Natural killer cell (primary cell): ENCODE measurements at regions of chr2 and their contacts with region 1.

Region 1: GRCh38 chr2:55168221-55169154 is 63.6 kb downstream of the CLHC1 start:
- DNase-seq: peak in 1 of 2 donors; percentile 73
- ATAC-seq: peak in 2 of 3 donors; percentile 48 to 62
- H3K4me3 ChIP-seq: no peak overlapping the region
- H3K4me3 Mint-ChIP-seq: no peak overlapping the region
- H3K27ac ChIP-seq: no peak overlapping the region
- H3K27ac Mint-ChIP-seq: no peak overlapping the region
- H3K4me1 ChIP-seq: no peaks in the 10 kb centered on the region
- H3K4me1 Mint-ChIP-seq: peaks cover 5 to 14% of the 10 kb centered on the region in 2 donors
- H3K27me3 ChIP-seq: no peaks in the 10 kb centered on the region
- H3K27me3 Mint-ChIP-seq: no peaks in the 10 kb centered on the region
- CTCF ChIP-seq: peak; percentile 59

Region 2: GRCh38 chr2:54899576-54900200 is 268.8 kb before region 1 on chr2:
- intact Hi-C with region 1: loop called (anchors 2 kb)
- DNase-seq: peak in 1 of 2 donors; percentile 51
- ATAC-seq: peak in 1 of 3 donors; percentile 43
- H3K4me3 ChIP-seq: no peak overlapping the region
- H3K4me3 Mint-ChIP-seq: no peak overlapping the region
- H3K27ac ChIP-seq: no peak overlapping the region
- H3K27ac Mint-ChIP-seq: peak overlapping the region in 1 of 2 donors; percentile 29
- H3K4me1 ChIP-seq: peaks cover 11% of the 10 kb centered on the region
- H3K4me1 Mint-ChIP-seq: peaks cover 12 to 17% of the 10 kb centered on the region in 2 donors
- H3K27me3 ChIP-seq: no peaks in the 10 kb centered on the region
- H3K27me3 Mint-ChIP-seq: peaks cover 0 to 3% of the 10 kb centered on the region in 2 donors
- CTCF ChIP-seq: peak; percentile 44

Region 3: DNA sequence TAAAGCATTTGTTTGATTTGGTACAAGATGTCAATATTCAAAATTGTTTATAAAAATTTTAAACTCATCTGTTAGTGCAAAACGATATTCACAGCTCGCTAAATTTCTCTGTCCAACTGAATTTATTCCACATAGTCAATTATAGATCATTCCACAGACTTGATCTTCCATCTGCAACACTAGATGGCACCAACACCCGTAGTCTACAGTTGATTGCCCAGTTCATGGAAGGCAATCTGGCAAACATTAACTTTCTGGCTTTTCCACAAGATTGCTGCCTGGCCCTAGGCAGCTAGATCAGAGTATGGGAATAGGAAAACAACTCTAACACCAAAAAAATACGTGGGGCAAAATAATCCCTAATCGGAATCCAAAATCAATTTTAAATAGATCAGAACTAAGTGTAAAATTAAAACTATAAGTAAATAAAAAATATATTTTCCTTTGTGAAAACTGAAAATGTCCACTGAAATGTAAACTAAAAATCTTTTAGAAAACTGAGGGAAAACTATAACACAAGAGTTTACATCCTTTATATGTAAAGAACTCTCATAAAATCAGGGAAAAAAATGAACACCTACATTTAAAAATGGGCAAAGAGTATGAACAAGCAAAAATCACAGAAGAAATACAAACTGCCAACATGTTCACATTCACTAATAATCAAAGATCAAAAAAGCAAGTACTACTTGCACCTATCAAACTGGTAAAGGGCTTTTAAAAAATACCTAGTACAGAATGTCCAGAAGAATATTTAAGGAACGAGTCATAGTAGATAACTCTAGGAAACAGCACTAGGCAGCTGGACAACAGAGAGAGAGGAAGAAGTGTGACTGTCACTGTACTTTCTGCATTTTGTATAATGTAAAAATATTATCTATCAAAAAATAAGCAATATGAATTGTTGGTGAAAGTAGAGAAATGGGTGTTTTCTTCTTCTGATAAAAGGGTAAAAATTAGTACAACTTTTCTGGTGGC is 153.2 kb before region 1 on chr2:
- intact Hi-C with region 1: loop called (anchors 2 kb)
- DNase-seq: peak in 1 of 2 donors; percentile 75
- ATAC-seq: peak in 2 of 3 donors; percentile 19 to 39
- H3K4me3 ChIP-seq: no peak overlapping the region
- H3K4me3 Mint-ChIP-seq: no peak overlapping the region
- H3K27ac ChIP-seq: no peak overlapping the region
- H3K27ac Mint-ChIP-seq: peak overlapping the region in 1 of 2 donors; percentile 53
- H3K4me1 ChIP-seq: peaks cover 4% of the 10 kb centered on the region
- H3K4me1 Mint-ChIP-seq: peaks cover 49 to 63% of the 10 kb centered on the region in 2 donors
- H3K27me3 ChIP-seq: no peaks in the 10 kb centered on the region
- H3K27me3 Mint-ChIP-seq: no peaks in the 10 kb centered on the region
- CTCF ChIP-seq: peak; percentile 41

Region 4: DNA sequence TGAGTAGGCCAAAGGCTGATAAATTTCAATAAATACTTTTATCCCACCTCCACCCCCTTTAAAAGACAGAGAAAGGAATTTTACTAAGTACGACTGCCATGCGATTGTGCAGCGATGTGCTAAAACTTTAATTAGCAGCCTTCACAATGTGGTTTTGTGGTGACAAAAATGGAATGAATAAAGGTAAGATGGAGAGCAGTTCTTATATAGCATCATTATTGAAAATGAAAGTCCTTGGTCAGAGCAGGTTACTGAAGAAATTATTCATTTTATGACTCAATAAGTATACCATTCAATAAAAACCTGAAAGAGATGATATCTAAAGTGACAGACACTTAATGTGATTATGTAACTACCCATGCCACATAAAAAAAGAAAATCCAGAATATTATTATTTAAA is 133.8 kb after region 1 on chr2:
- intact Hi-C with region 1: no loop called
- DNase-seq: peak in 1 of 2 donors; percentile 28
- ATAC-seq: peak in 2 of 3 donors; percentile 34 to 63
- H3K4me3 ChIP-seq: no peak overlapping the region
- H3K4me3 Mint-ChIP-seq: no peak overlapping the region
- H3K27ac ChIP-seq: no peak overlapping the region
- H3K27ac Mint-ChIP-seq: peak overlapping the region in 1 of 2 donors; percentile 62
- H3K4me1 ChIP-seq: no peaks in the 10 kb centered on the region
- H3K4me1 Mint-ChIP-seq: peaks cover 6% of the 10 kb centered on the region in 2 donors
- H3K27me3 ChIP-seq: no peaks in the 10 kb centered on the region
- H3K27me3 Mint-ChIP-seq: no peaks in the 10 kb centered on the region
- CTCF ChIP-seq: no peak